WTC11 (cell line): ENCODE measurements at regions of chr7 and their contacts with region 1.

Region 1: DNA sequence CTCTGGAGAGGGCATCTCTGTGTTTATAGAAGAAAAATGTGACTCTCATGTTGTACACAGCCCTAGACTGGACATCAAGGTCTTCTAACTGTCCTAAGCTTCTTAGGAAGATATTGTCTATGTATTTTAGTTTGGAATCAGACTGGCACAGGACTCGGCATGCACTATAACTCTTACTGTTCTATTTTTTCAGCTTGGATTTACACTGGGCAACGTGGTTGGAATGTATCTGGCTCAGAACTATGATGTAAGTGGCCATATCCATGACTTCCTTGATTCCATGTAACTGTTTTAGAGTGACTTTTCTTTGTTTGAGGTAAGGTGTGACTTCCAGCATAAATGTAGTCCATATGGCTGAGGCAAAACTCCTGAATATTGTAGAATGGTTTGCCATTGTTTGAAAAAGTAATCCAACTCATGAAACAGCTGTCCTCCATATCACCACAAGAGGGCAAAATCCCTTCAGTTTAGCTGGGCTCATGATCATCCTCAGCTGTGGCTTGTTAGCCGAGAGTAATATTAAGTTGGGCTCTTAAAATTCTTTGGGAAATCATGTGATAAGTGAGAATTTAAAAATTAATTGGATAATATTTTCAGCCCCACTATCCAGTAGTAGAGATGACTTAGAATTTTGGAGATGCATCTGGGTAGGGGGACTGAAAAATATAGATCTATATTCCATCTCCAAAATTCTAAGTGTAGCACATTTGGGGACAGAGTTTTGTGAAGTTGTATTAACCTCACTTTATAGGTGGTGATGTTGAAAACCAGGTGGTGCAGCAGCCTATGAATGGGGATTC is 10.4 kb downstream of the STMP1 start:
- DNase-seq: no peak
- ATAC-seq: peak; percentile 81
- H3K4me3 Mint-ChIP-seq: no peak overlapping the region
- H3K27ac Mint-ChIP-seq: peak overlapping the region; percentile 49; the same call in 1 of the 2 replicates
- H3K4me1 Mint-ChIP-seq: peaks cover 7% of the 10 kb centered on the region
- H3K27me3 Mint-ChIP-seq: no peaks in the 10 kb centered on the region
- CTCF ChIP-seq: peak; percentile 56

Region 2: GRCh38 chr7:135662373-135663114 is 10.2 kb before region 1 on chr7 and contains the start of gene STMP1:
- CTCF ChIA-PET with region 1: interaction called, 24 read pairs
- POLR2A ChIA-PET with region 1: interaction called, 4 read pairs
- DNase-seq: peak; percentile 98
- ATAC-seq: peak; percentile 94
- H3K4me3 Mint-ChIP-seq: peak within 1 kb of the TSS; percentile 99
- H3K27ac Mint-ChIP-seq: peak within 1 kb of the TSS; percentile 99
- H3K4me1 Mint-ChIP-seq: peaks cover 17% of the 10 kb centered on the region
- H3K27me3 Mint-ChIP-seq: no peaks in the 10 kb centered on the region
- CTCF ChIP-seq: peak; percentile 54
- total RNA-seq, gene STMP1: 26.1 to 31.6 TPM (median 30.4 TPM) in 3 replicates

Region 3: DNA sequence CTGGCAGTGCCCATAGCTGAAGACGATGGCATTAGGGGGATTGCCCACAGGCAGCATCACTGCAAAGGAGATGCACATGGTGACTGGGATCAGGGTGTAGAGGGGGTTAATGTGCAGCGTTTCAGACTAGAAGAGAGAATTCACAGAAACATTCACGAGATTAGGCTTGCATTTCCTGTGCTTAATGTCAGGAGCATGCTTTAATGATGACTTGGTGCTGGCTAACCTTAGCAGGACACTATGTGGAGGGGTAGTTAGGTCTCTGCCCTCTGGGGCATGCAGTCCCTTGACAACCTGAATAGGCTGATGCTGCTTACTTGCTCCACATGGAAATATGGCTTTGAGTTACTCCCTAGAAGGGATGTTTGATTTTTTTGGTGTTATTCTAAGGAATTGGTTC is 11.4 kb after region 1 on chr7:
- CTCF ChIA-PET with region 1: interaction called, 23 read pairs
- POLR2A ChIA-PET with region 1: no interaction called
- DNase-seq: no peak
- ATAC-seq: peak; percentile 41
- H3K4me3 Mint-ChIP-seq: no peak overlapping the region
- H3K27ac Mint-ChIP-seq: no peak overlapping the region
- H3K4me1 Mint-ChIP-seq: peaks cover 13% of the 10 kb centered on the region
- H3K27me3 Mint-ChIP-seq: no peaks in the 10 kb centered on the region
- CTCF ChIP-seq: no peak

Region 4: DNA sequence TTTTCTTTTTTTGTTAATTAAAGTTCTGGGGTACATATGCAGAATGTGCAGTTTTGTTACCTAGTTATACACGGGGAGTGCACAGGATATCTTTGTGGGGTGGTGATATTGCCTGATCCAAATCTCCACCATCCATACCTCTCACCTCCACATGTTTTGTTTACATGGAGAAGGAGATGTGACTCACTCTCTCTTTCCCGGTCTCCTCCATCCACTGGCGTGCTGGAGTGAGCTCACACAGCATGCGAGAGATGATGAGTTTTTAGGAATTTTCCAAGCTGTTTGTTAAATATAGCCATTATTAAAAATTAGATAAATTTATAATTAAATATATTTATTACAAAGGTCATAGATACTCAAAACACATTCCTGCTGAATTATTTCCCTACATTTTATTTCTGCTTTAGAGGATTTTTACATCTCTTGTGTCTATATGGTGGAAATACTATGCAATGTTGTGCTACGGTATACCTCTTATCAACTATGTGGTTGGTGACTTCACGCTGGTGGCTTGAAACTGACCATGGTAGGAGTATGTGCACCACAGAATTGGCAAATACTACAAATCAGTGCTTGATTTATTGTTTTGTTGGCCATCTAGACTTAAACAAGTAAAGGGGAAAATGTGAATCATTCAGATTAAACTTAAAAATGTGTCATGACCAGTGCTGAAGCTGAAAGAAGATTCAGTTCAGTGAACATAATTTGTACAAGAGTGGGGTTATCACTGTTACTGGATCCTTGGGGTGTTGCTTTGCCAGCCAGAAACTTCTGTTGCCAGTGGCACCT is 183.8 kb after region 1 on chr7:
- CTCF ChIA-PET with region 1: no interaction called
- POLR2A ChIA-PET with region 1: no interaction called
- DNase-seq: no peak
- ATAC-seq: no peak
- H3K4me3 Mint-ChIP-seq: no peak overlapping the region
- H3K27ac Mint-ChIP-seq: no peak overlapping the region
- H3K4me1 Mint-ChIP-seq: peaks cover 10% of the 10 kb centered on the region
- H3K27me3 Mint-ChIP-seq: peaks cover 3% of the 10 kb centered on the region; the same call in 1 of the 2 replicates
- CTCF ChIP-seq: no peak